ENCODE measurements at regions of chr1 and their contacts with region 1.

Region 1: GRCh38 chr1:226653311-226653921 is 85.7 kb downstream of the ITPKB start:
- DNase-seq: peak; percentile 70
- ATAC-seq: peak; percentile 84
- H3K4me3 Mint-ChIP-seq: peak overlapping the region; percentile 85
- H3K27ac Mint-ChIP-seq: peak overlapping the region; percentile 95
- H3K4me1 Mint-ChIP-seq: peaks cover 69% of the 10 kb centered on the region
- H3K27me3 Mint-ChIP-seq: no peaks in the 10 kb centered on the region

Region 2: GRCh38 chr1:226589008-226589733 is 64.2 kb before region 1 on chr1:
- POLR2A ChIA-PET with region 1: no interaction called
- DNase-seq: no peak
- ATAC-seq: no peak
- H3K4me3 Mint-ChIP-seq: no peak overlapping the region
- H3K27ac Mint-ChIP-seq: no peak overlapping the region
- H3K4me1 Mint-ChIP-seq: no peaks in the 10 kb centered on the region
- H3K27me3 Mint-ChIP-seq: peaks cover 5% of the 10 kb centered on the region

Region 3: DNA sequence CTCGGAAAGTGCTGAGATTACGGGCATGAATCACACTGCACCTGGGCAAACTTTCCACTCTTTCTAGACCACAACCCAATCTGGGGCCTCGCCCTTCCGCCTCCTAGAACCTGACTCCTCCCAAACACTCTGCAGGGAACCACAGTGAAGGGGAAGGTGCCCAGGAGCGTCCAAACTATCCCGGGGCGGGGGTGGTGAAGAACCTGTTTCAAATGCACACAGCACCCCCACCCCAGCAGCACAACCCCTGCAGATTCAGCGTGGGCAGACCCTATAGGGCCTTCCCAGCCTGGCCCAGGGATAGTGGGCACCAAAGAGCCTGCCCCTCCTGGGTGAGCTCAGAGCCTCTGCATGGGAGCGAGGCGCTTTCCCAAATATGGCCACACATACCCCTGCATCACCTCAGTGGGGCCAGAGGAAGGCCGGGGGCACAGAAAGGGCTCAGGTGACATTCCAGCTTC is 17.9 kb before region 1 on chr1:
- POLR2A ChIA-PET with region 1: interaction called, 11 read pairs
- DNase-seq: peak; percentile 41
- ATAC-seq: peak; percentile 37
- H3K4me3 Mint-ChIP-seq: peak overlapping the region; percentile 72
- H3K27ac Mint-ChIP-seq: peak overlapping the region; percentile 84
- H3K4me1 Mint-ChIP-seq: peaks cover 26% of the 10 kb centered on the region
- H3K27me3 Mint-ChIP-seq: no peaks in the 10 kb centered on the region

Region 4: DNA sequence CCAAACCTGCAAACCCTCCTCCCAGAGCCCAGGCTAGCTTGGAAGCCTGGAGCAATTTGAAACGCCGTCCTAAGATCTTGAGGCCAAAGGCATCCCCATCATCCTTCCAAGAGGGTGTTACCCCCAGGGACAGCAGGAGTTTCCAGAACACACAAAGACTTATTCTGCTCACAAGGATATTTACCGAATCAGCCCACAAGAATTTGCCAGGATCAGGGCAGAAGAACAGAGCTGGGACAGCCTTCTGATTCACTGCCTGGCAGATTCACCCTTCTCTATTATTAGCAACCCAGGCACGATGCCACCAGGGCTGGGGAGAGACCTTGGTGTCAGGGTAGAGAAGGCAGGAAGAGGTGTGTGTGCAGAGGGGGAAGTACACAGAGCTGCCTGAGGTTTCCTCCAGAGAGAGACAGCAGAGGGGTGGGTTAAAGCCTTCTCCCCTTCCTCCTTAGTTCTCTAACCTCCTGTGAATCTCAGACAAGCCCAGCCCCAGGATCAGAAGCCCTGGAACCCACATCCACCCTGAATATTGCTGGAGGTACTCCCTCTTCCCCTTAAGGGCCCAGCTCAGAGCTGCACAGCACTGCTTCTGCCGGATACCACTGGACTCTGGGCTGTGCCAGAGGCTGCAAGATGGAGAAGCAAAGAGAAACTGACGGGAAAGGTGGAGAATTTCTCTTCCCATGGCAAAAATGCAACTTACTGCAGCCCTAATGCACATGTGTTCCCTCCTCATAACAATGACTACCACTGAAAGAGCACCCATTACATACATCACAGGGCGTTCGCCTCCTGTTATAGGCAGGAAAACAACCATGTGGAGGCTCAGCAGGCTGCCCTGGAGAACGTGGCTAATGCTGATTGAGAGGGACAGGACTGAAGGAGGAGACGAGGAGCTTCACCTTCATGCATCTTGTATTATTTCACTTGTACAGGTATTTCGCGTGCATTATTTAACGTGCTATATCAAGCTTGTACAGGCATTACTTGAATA is 23.9 kb after region 1 on chr1:
- POLR2A ChIA-PET with region 1: interaction called, 12 read pairs
- DNase-seq: no peak
- ATAC-seq: peak; percentile 64
- H3K4me3 Mint-ChIP-seq: peak overlapping the region; percentile 81
- H3K27ac Mint-ChIP-seq: peak overlapping the region; percentile 89
- H3K4me1 Mint-ChIP-seq: peaks cover 80% of the 10 kb centered on the region
- H3K27me3 Mint-ChIP-seq: no peaks in the 10 kb centered on the region

Region 5: DNA sequence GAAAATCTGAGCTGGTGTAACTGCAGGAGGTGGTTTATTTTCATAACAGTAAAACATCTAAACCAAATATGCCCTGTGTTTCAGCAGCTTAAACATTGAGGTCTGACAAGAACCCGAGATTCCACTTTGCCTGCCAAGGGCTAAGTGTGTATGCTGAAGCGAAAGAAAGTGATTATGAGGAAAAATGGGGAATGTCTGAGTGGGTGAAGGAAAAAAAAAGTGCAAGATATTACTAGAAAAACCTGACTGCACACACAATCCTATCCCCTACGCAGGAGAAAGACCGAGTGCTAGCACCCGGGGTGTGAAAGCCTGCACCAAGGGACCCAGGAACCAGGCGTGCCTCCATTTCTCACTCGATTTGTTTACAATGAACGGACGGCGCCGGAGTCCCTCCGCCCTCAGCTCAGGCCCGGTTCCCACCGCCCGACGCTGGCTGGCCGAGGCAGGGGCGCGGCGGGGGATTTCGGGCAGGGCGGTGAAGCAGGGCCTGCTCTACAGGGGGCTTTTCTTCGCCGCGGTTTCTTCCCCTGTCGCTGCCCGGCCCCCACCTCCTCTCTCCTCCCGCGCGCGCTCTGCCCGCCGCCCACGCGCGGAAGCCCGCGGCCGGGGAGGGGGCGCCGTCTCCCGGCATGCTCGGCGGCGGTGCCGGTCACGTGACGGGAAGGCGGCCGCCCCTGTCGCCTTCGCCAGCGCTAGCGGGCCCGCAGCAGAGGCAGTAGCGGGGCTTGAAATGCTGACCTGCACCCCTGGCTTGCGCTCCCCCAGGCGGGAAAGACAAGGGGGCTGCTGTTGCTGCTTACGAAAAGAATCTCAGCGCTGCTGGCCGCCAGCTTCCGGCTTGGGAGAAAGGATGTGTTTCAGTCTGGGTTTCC is 49.8 kb after region 1 on chr1:
- POLR2A ChIA-PET with region 1: interaction called, 10 read pairs
- DNase-seq: peak; percentile 88
- ATAC-seq: peak; percentile 82
- H3K4me3 Mint-ChIP-seq: peak overlapping the region; percentile 86
- H3K27ac Mint-ChIP-seq: peak overlapping the region; percentile 87
- H3K4me1 Mint-ChIP-seq: peaks cover 49% of the 10 kb centered on the region
- H3K27me3 Mint-ChIP-seq: no peaks in the 10 kb centered on the region